Activated CD8-positive, alpha-beta T cell treated with anti-CD3 and anti-CD28 coated beads for 36 hours (primary cell): ENCODE measurements at regions of chr1 and their contacts with region 1.

Region 1: GRCh38 chr1:37486680-37487618 is 12.6 kb downstream of the ZC3H12A start:
- DNase-seq: peak; percentile 85
- ATAC-seq: peak; percentile 88
- H3K4me3 Mint-ChIP-seq: no peak overlapping the region
- H3K27ac Mint-ChIP-seq: peak overlapping the region; percentile 75
- H3K4me1 Mint-ChIP-seq: peaks cover 17% of the 10 kb centered on the region
- H3K27me3 Mint-ChIP-seq: no peaks in the 10 kb centered on the region
- CTCF ChIP-seq: peak; percentile 99

Region 2: GRCh38 chr1:37294529-37294928 is 192.4 kb before region 1 on chr1:
- CTCF ChIA-PET with region 1: no interaction called
- POLR2A ChIA-PET with region 1: no interaction called
- intact Hi-C with region 1: no loop called
- DNase-seq: no peak
- ATAC-seq: no peak
- H3K4me3 Mint-ChIP-seq: no peak overlapping the region
- H3K27ac Mint-ChIP-seq: no peak overlapping the region
- H3K4me1 Mint-ChIP-seq: no peaks in the 10 kb centered on the region
- H3K27me3 Mint-ChIP-seq: peaks cover 22% of the 10 kb centered on the region
- CTCF ChIP-seq: no peak

Region 3: DNA sequence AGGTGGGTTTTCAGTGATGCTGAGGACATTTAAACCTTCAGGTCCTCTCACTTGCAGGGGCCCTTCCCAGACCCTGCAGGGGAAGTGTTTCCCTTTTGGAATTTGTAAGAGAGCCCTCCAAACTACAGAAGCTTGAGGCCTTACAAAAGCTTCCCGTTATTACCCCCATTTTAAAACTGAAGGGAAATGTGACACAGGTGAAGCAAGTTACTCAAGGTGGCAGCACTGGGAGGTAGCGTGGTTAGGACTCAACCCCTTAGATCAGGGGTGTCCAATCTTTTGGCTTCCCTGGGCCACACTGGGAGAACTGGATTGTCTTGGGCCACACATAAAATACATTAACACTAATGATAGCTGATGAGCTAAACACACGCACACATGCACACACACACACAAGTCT is 28.4 kb before region 1 on chr1:
- CTCF ChIA-PET with region 1: interaction called, 380 read pairs
- POLR2A ChIA-PET with region 1: interaction called, 12 read pairs
- intact Hi-C with region 1: loop called (anchors 2 kb)
- DNase-seq: peak; percentile 9
- ATAC-seq: no peak
- H3K4me3 Mint-ChIP-seq: no peak overlapping the region
- H3K27ac Mint-ChIP-seq: no peak overlapping the region
- H3K4me1 Mint-ChIP-seq: peaks cover 7% of the 10 kb centered on the region
- H3K27me3 Mint-ChIP-seq: no peaks in the 10 kb centered on the region
- CTCF ChIP-seq: no peak

Region 4: GRCh38 chr1:37498872-37499617 is 12.1 kb after region 1 on chr1:
- CTCF ChIA-PET with region 1: interaction called, 91 read pairs
- POLR2A ChIA-PET with region 1: interaction called, 4 read pairs
- intact Hi-C with region 1: no loop called
- DNase-seq: no peak
- ATAC-seq: no peak
- H3K4me3 Mint-ChIP-seq: no peak overlapping the region
- H3K27ac Mint-ChIP-seq: no peak overlapping the region
- H3K4me1 Mint-ChIP-seq: peaks cover 19% of the 10 kb centered on the region
- H3K27me3 Mint-ChIP-seq: no peaks in the 10 kb centered on the region
- CTCF ChIP-seq: no peak

Region 5: DNA sequence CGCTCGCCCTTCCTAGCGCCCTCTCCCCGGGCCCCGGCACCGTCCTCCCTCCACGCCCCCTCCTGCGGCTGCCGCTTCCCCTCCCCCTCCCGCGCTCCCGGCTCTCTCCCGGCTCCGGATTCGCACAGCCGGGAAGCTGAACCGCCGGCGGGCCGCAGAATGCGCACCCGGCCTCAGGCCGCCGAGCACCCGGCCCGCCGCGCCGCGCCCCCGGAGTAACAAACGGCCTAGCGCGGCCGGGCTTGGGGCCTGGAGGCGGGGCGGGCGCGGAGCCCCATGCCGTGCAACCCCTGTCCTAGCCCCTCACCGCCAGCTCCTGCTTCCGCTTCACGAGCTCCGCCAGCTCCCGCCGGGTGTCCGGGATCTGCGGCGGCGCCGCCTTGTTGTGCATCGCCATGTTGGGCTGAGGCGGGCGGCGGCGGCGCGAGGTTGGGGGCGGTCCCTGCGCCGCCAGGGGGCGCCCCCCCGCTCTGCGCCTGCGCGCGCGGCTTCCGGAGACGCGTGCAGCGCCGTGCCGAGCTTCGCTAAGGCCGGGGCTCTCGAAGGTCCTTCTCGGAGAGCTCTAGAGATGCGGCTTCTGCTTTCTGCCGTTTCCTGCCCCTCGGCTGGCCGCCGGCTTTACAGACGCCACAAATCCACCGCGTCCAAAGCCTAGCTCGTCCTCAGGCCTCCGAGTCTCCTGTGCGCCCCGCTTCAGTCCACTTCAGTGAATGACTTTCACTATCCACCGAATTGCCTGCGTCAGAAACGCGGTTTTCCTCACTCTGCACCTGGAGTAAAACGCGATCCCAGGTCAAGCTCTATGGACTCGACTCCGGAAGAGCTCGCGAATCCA is 27.6 kb after region 1 on chr1 and contains the start of gene MEAF6:
- CTCF ChIA-PET with region 1: interaction called, 37 read pairs
- POLR2A ChIA-PET with region 1: interaction called, 5 read pairs
- intact Hi-C with region 1: no loop called
- DNase-seq: peak; percentile 84
- ATAC-seq: peak; percentile 91
- H3K4me3 Mint-ChIP-seq: peak within 1 kb of the TSS; percentile 98
- H3K27ac Mint-ChIP-seq: peak within 1 kb of the TSS; percentile 96
- H3K4me1 Mint-ChIP-seq: peaks cover 42% of the 10 kb centered on the region
- H3K27me3 Mint-ChIP-seq: no peaks in the 10 kb centered on the region
- CTCF ChIP-seq: peak; percentile 70
- total RNA-seq, gene MEAF6: 74.0 to 76.3 TPM